Esophagus muscularis mucosa (tissue), 4 donors: ENCODE measurements at regions of chr4 and their contacts with region 1.

Region 1: DNA sequence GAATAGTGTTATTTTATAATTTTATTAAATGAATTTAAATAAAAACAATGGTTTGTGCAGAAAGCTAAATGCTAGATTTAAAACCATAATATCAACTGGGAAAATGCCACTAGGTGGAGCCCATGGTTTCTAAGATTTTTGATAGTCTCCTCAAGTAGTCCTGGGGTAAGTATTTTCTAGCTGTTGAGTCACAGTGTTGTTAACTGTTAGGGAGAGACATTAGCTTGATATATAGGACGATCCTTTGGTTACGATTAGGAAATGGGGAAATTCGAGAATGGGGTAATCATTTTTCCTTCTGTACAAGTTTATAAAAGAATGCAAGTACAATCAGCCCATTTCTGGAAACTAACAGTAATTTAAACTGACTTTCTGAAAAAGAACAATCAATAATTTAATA is 378.4 kb downstream of the ANKRD50 start:
- DNase-seq: no peak
- H3K4me3 ChIP-seq: no peak overlapping the region
- H3K27ac ChIP-seq: no peak overlapping the region
- H3K4me1 ChIP-seq: no peaks in the 10 kb centered on the region
- H3K27me3 ChIP-seq: no peaks in the 10 kb centered on the region
- CTCF ChIP-seq: peak; percentile 43 to 59 (median 57)
- EP300 ChIP-seq: no peak
- POLR2A ChIP-seq: no peak

Region 2: DNA sequence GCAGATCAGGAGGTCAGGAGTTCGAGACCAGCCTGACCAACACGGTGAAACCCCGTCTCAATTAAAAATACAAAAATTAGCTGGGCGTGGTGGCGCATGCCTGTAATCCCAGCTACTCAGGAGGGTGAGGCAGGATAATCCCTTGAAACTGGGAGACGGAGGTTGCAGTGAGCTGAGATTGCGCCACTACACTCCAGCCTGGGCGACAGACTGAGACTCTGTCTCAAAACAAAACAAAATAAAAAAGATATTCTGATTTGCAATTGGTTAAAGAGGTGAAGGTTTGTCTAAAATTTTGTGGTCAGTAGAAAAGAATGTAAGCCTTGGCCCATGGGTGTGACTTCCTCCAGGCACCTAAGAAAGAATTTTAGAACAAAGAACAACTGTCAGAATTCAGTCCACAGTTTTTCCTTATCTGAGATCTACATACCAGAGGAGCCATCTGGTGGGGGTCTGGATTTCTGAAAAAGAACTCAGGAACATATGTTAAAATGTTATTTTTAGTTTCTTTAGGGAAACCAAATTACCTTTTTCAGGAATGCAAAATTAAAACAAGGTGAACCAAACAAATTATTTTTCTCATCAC is 55.7 kb before region 1 on chr4:
- intact Hi-C with region 1: no loop called
- DNase-seq: no peak
- H3K4me3 ChIP-seq: no peak overlapping the region
- H3K27ac ChIP-seq: no peak overlapping the region
- H3K4me1 ChIP-seq: no peaks in the 10 kb centered on the region
- H3K27me3 ChIP-seq: no peaks in the 10 kb centered on the region
- CTCF ChIP-seq: no peak
- EP300 ChIP-seq: no peak
- POLR2A ChIP-seq: no peak

Region 3: DNA sequence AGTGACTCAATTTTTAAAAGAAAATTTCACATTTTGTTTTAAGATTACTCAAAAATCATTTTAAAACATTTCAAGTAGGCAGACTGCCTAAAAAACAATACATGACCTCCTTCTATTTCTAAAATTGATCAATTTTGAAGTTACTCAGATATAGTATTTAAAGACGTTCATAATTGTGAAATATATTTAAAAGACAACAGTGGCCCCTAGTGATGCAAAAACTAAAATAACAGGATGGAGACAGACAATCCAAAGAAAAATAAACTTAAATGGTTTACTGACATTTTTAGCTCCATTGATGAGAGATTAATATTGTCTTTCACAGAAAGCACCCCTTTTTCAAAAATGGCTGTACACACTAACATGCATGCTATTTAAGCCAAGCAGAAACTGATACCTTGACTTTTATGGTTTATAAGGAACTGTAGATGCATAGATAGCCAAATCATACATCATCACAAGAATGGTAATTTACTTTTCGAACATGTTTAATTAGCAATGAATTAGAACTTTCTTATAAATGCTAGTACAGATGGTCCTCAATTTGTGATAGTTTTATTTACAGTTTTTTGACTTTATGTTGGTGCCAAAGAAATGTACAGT is 910.8 kb after region 1 on chr4:
- intact Hi-C with region 1: loop called (anchors 5 kb)
- DNase-seq: no peak
- H3K4me3 ChIP-seq: no peak overlapping the region
- H3K27ac ChIP-seq: no peak overlapping the region
- H3K4me1 ChIP-seq: no peaks in the 10 kb centered on the region
- H3K27me3 ChIP-seq: no peaks in the 10 kb centered on the region
- CTCF ChIP-seq: peak; percentile 11 to 43 (median 35)
- EP300 ChIP-seq: no peak
- POLR2A ChIP-seq: no peak

Region 4: GRCh38 chr4:125283707-125284279 is 949.7 kb after region 1 on chr4:
- intact Hi-C with region 1: loop called (anchors 5 kb)
- DNase-seq: no peak
- H3K4me3 ChIP-seq: no peak overlapping the region
- H3K27ac ChIP-seq: no peak overlapping the region
- H3K4me1 ChIP-seq: no peaks in the 10 kb centered on the region
- H3K27me3 ChIP-seq: no peaks in the 10 kb centered on the region
- CTCF ChIP-seq: peak; percentile 38 to 56 (median 53)
- EP300 ChIP-seq: no peak
- POLR2A ChIP-seq: no peak